GM12878 (cell line): ENCODE measurements at regions of chr1 and their contacts with region 1.

Region 1: GRCh38 chr1:53182111-53182593 is 14.5 kb upstream of the CPT2 start:
- DNase-seq: peak; percentile 20
- ATAC-seq: peak; percentile 94
- H3K4me3 ChIP-seq: no peak overlapping the region
- H3K27ac ChIP-seq: no peak overlapping the region
- H3K4me1 ChIP-seq: no peaks in the 10 kb centered on the region
- H3K27me3 ChIP-seq: no peaks in the 10 kb centered on the region; a peak in 1 of 4 replicates
- CTCF ChIP-seq: peak; percentile 79 to 93 (median 81)
- EP300 ChIP-seq: no peak
- POLR2A ChIP-seq: no peak
- RAD21 ChIP-seq: peak; percentile 62

Region 2: DNA sequence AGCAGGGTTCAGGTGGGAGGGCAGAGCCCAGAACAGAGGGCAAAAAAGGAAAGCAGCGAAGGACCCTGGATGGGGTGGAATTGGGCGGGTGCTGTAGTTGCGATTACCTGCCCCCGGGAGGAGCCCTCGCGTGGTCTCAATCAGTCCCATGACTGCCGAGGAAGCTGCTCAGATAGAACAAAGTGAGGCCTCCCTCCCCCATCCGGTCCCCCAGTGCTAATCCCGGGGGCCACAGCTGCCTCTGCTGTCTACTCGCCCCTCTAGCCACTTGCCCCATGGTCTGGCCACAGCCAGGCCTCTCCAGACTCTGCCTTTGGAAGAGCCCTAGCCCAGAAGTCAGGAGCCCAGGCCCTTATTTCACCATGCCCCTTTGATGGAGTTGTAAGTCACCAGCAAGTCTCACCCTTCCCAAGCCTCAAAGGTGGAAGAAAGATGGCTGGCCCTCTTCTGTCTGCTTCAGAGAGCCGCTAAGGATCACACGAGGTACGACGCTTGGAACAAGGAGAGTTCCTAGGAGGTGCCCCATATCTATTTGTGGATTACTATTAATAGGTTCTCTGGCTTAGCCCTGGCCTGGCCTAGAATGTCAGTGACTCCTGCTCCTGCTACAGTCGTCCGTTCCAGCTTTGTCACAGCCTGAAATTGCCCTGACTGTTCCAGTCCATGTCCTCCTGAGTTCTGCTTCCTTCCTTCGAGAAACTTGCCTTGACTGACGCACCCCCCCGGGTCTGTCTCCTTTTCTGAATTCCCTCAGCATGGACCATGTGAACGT is 277.0 kb before region 1 on chr1:
- CTCF ChIA-PET with region 1: interaction called, 17 read pairs
- POLR2A ChIA-PET with region 1: no interaction called
- RAD21 ChIA-PET with region 1: no interaction called
- SMC1A ChIA-PET with region 1: no interaction called
- in situ Hi-C with region 1: loop called (anchors 25 kb)
- intact Hi-C with region 1: loop called (anchors 1 kb)
- DNase-seq: no peak
- ATAC-seq: peak; percentile 94
- H3K4me3 ChIP-seq: no peak overlapping the region
- H3K27ac ChIP-seq: no peak overlapping the region
- H3K4me1 ChIP-seq: no peaks in the 10 kb centered on the region
- H3K27me3 ChIP-seq: no peaks in the 10 kb centered on the region
- CTCF ChIP-seq: peak; percentile 55 to 58 (median 56)
- EP300 ChIP-seq: no peak
- POLR2A ChIP-seq: no peak
- RAD21 ChIP-seq: peak; percentile 53